ENCODE measurements at regions of chr2 and their contacts with region 1.

Region 1: DNA sequence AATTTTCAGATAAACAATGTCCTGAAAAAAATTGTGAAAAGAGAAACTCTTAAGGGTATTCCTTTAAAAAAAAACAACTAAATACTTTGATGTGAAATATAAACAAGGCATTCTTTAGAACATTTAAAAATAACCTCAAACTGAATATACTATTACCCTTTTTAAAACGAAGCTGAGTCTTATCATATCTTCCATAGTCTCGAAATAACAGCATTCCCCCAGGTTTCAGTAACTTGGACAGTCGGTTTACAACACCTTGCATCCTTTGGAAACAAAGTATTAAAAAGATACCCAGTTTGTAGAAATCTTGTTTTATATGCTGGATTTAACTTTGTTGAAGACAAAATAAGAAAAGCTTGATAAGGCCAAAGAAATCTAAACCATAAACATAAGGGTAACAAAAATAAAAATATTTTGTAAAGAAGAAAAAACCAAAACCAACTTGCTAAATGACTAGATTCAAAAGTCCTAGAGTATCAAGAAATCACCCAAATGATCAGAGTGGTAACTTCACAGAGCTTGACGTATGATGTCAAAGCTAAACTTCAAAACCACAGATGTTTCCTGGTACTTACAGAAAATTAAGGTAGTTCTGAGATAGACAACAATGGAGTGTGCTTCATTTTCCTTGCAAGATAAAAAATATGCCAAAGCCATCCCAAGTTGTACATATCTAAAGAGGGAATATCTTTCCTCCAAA is 107.8 kb downstream of the METTL8 start:
- DNase-seq: no peak
- H3K4me3 Mint-ChIP-seq: peak overlapping the region; percentile 61
- H3K27ac Mint-ChIP-seq: peak overlapping the region; percentile 79
- H3K4me1 Mint-ChIP-seq: peaks cover 37% of the 10 kb centered on the region
- H3K27me3 Mint-ChIP-seq: no peaks in the 10 kb centered on the region

Region 2: GRCh38 chr2:171347591-171348032 is 21.6 kb after region 1 on chr2:
- intact Hi-C with region 1: loop called (anchors 2 kb)
- DNase-seq: no peak
- H3K4me3 Mint-ChIP-seq: no peak overlapping the region
- H3K27ac Mint-ChIP-seq: peak overlapping the region; percentile 76
- H3K4me1 Mint-ChIP-seq: peaks cover 23% of the 10 kb centered on the region
- H3K27me3 Mint-ChIP-seq: no peaks in the 10 kb centered on the region

Measured in activated CD4-positive, alpha-beta T cell treated with anti-CD3 and anti-CD28 coated beads, Interleukin-2, amount 10 ng/mL, durations not matched to agents 24 days and 14 days (primary cell).